ENCODE measurements at regions of chr19 and their contacts with region 1.

Region 1: DNA sequence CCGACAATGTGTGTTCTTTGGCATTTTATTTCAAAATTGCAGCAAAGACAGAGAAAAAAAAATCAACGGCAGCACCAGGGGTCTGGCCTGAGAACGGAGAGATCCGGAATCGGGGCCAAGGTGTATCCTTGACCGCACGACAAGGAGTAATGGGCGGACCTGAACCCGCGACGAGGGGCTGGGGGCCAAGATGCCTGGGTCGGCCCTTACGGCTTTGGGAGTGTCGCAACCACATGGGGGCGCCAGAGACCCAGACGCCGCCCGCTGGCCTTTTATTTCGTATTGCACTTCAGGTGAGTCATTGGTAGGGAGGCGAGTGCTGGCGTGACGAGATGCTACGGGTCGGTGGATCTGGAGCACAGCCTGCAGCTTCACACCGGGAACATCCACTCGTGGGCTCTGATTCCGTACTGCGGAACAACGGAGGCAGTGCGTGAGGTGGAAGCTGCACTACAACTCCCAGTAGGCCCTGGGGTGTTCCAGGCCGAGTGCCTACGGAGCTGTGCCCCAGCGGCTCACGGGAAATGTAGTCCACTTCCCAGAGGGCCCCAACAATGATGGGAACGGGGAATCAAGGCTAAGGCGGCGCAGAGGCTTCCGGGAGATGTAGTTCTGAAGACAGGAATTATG is 15.7 kb downstream of the BCAT2 start:
- ATAC-seq: peak; percentile 95 to 99 (median 96)
- H3K4me3 ChIP-seq: peak overlapping the region; percentile 36 to 47 (median 39)
- H3K27ac ChIP-seq: peak overlapping the region; percentile 74 to 80
- H3K4me1 ChIP-seq: peaks cover 2 to 15% of the 10 kb centered on the region in 2 donors

Region 2: DNA sequence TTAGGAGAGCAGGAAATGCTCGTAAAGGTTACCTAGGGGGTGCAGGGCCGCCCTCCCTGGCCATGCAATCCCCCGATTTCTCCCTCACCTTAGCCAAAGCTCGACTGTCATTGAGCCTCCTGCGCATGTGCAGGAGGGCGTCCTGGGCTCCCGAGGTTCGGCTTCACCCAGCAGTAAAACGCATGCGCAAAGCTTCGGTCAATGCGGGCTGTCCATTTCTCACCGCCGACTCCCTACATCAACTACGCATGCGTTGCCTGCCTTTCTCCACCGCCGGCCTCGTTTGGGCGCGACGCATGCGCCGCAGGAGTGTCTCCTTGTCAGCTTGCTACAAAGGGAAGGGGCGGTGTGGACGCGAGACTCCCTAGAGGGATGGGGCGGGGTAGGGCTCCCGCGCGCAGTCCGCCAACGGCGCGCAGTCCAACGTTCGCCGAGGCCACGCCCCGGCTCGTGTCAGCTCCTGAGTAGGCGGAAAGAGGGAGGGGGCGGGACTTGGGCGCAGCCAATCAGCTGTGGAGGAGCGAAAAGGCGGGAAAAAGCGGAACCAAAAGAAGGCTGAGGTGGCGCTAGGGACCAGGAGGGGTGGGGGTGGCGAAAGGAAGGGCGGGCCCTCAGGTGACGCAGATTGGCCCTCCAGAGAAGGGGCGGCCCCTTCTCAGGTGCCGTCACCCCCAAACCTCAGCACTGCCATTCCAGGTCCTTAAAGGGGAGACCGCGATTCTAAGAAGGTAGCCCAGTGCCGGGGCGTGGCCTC is 431.2 kb before region 1 on chr19 and contains the starts of genes SYNGR4 and TMEM143:
- in situ Hi-C with region 1: no loop called
- ATAC-seq: peak; percentile 83 to 91 (median 88)
- H3K4me3 ChIP-seq: peak within 1 kb of the TSS; percentile 22 to 34 (median 28)
- H3K27ac ChIP-seq: peak within 1 kb of the TSS; percentile 85 to 88
- H3K4me1 ChIP-seq: peaks cover 0 to 9% of the 10 kb centered on the region in 2 donors
- total RNA-seq, gene SYNGR4: 1.4 TPM in 1 of 8 experiments, not detected in the others
- total RNA-seq, gene TMEM143: 4.0 to 12.7 (median 7.9) TPM

Region 3: GRCh38 chr19:48954595-48955310 is 159.6 kb after region 1 on chr19 and contains the start of gene BAX:
- in situ Hi-C with region 1: loop called in 6 of 9 experiments (anchors 25 kb)
- ATAC-seq: peak; percentile 81 to 95 (median 93)
- H3K4me3 ChIP-seq: peak within 1 kb of the TSS; percentile 62 to 94 (median 78)
- H3K27ac ChIP-seq: peak within 1 kb of the TSS; percentile 49 to 83
- H3K4me1 ChIP-seq: peaks cover 6% of the 10 kb centered on the region in 2 donors
- total RNA-seq, gene BAX: 36.9 to 172 (median 97.8) TPM

Region 4: GRCh38 chr19:48970923-48971395 is 175.8 kb after region 1 on chr19:
- in situ Hi-C with region 1: loop called in 7 of 9 experiments (anchors 10 to 25 kb)
- ATAC-seq: peak; percentile 1 to 69 (median 49)
- H3K4me3 ChIP-seq: no peak overlapping the region
- H3K27ac ChIP-seq: no peak overlapping the region
- H3K4me1 ChIP-seq: peaks cover 4 to 5% of the 10 kb centered on the region in 2 donors

Region 5: GRCh38 chr19:49213791-49214190 is 418.6 kb after region 1 on chr19:
- in situ Hi-C with region 1: no loop called
- ATAC-seq: no peak
- H3K4me3 ChIP-seq: no peak overlapping the region
- H3K27ac ChIP-seq: no peak overlapping the region
- H3K4me1 ChIP-seq: no peaks in the 10 kb centered on the region